Mucosa of descending colon (tissue), 3 donors: ENCODE measurements at regions of chr10 and their contacts with region 1.

Region 1: DNA sequence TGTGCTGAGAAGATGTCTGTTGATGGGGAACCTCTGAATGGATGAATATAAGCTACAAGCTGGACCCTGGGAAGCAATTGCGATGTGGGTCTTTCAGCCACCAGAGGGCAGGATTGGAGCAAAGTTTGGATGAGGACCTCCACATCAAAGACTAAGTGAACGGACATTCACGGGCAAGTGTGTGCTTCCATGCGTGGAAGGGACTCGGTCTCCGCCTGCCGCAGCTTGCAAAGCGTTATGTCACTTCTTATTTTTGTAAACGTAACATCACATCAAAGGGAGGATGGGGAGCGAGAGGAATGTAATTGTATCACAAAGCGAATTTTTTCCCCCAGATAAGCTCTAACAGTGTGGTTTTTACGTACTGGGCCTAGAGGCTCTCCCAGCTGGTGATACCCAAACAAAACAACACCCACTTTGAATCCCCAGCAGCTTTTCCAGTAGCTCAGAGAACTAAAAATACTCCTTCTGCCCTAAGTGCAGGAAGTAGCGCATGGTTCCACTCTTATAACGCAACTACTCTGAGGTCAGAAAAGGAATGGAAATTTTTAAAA is 65.0 kb downstream of the VWA2 start:
- DNase-seq: peak; percentile 64 to 94 (median 77)
- ATAC-seq: peak; percentile 80
- H3K4me3 ChIP-seq: no peak overlapping the region
- H3K4me1 ChIP-seq: peaks cover 7% of the 10 kb centered on the region
- CTCF ChIP-seq: no peak

Region 2: DNA sequence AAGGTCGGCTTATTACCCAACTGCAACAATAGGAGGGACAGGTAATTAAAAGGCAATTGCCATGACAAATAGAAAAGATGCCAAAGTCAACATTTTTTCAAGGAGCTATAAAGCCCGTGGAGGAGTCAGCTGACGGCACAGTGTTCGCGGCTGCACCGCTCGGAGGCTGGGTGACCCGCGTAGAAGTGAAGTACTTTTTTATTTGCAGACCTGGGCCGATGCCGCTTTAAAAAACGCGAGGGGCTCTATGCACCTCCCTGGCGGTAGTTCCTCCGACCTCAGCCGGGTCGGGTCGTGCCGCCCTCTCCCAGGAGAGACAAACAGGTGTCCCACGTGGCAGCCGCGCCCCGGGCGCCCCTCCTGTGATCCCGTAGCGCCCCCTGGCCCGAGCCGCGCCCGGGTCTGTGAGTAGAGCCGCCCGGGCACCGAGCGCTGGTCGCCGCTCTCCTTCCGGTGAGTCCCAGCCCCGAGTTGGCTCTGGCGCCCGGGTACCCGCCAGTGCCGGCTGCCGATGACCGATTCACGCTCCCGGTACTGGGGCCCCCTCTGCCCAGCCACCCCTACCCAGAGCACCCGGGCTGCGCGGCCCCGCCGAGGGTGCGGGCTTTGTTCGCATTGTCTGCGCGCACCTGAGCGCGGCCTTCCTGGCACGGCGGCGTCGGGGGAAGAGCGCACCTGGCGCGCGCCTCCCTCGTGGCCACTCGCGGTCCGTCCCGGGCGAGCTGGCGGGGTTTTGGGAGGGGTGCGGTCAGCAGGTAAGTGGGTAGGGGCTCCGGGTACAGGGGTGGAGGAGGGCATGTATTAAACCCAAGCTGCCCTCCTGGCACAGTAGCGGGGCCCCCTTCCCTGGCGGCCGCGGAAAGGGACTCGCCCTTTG is 64.7 kb before region 1 on chr10 and contains the start of gene VWA2:
- intact Hi-C with region 1: no loop called
- DNase-seq: peak; percentile 62 to 72 (median 64)
- ATAC-seq: peak; percentile 91
- H3K4me3 ChIP-seq: no peak within 1 kb of the TSS
- H3K4me1 ChIP-seq: peaks cover 15% of the 10 kb centered on the region
- CTCF ChIP-seq: no peak
- total RNA-seq, gene VWA2: 0.47 to 3.2 (median 1.9) TPM

Region 3: DNA sequence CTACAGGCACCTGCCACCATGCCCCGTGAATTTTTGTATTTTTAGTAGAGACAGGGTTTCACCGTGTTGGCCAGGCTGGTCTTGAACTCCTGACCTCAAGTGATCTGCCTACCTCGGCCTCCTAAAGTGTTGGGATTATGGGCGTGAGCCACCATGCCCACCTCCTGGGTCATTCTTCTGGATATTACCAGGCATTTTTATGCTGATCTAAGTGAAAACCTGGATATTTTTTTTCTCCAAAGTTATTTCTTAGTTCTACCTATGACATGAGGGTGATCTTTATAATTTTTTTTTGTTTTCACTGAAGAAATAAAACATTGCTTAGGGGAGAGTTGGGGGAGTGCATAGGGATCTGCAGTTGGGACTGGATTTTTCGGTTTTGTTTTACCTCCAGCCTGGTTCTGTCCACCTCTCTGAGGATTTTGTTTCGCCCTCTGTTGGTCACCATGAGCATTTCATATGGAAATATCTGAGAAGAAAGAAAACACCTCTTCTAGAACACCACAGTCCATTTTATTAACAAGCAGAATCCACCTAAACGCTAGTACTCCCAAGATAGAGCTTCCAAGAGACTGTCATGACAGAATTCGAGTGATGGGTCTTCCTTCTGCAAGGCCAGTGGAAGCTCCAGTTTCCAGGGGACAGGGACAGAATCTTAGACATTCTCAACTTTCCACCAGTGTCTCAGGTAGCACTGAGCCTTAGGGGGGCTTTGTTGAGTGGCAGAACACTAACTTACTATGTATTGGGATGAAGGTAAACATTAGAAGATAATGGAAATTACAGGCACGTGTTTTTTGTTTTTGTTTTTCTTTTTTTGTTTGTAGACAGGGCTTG is 133.6 kb after region 1 on chr10:
- intact Hi-C with region 1: loop called (anchors 5 to 10 kb)
- DNase-seq: no peak
- ATAC-seq: no peak
- H3K4me3 ChIP-seq: no peak overlapping the region
- H3K4me1 ChIP-seq: no peaks in the 10 kb centered on the region
- CTCF ChIP-seq: no peak